Activated T-helper 2 cell treated with anti-CD3 and anti-CD28 coated beads, Interferon-gamma antibody, Interleukin-2, Interleukin-4, amounts not matched to agents 10 μg/mL and 5 μg/mL and 100 μg/mL, durations not matched to agents 14 hours and 24 hours and 36 hours (primary cell): ENCODE measurements at regions of chr4 and their contacts with region 1.

Region 1: GRCh38 chr4:102344954-102345794 is at the start of gene SLC39A8:
- DNase-seq: peak; percentile 88
- H3K4me3 Mint-ChIP-seq: peak within 1 kb of the TSS; percentile 83
- H3K27ac Mint-ChIP-seq: peak within 1 kb of the TSS; percentile 96
- H3K4me1 Mint-ChIP-seq: peaks cover 38% of the 10 kb centered on the region
- H3K27me3 Mint-ChIP-seq: peaks cover 3% of the 10 kb centered on the region
- total RNA-seq, gene SLC39A8: 136 TPM in 2 replicates

Region 2: DNA sequence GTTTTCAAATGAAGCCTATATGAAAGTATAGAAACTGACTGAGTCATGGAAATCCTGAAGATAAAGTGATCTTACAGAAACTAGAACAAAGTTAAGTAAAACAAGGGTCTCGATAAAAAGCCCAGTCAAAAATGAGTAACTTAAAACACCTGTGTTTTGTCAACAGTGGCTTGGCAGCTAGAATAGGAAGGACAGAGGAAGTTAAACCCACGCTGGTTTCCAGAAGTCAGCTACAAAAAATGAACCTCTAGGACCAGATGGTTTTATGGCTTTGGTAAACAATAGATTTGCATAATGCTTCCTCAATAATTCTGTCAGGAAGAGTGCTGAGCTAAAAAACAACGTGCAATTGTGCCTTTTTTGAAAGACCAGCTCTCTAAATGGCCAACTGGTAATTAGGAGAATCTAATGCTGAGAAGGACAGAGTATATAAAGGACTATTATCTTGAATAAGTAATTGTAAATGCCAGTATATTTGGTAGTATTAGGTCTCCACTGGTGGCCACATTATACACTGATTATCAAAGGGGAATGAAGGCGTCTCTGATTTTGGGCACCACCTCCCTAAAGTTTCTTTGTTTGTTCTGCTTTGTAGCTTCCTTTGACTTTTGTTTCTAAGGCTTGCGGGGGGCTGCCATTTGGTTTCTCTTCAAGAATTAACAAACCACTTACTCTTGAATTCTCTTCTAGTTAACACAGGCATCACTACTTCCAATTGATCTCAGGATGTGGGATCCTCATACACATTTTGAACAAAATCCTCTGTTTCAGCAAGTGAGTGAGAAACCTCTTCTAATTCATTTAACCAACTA is 925.6 kb before region 1 on chr4:
- intact Hi-C with region 1: loop called (anchors 2 kb)
- DNase-seq: no peak
- H3K4me3 Mint-ChIP-seq: peak overlapping the region; percentile 1
- H3K27ac Mint-ChIP-seq: peak overlapping the region; percentile 0
- H3K4me1 Mint-ChIP-seq: peaks cover 46% of the 10 kb centered on the region
- H3K27me3 Mint-ChIP-seq: peaks cover 17% of the 10 kb centered on the region

Region 3: GRCh38 chr4:102390438-102390837 is 45.3 kb after region 1 on chr4:
- intact Hi-C with region 1: loop called (anchors 1 kb)
- DNase-seq: no peak
- H3K4me3 Mint-ChIP-seq: no peak overlapping the region
- H3K27ac Mint-ChIP-seq: peak overlapping the region; percentile 44
- H3K4me1 Mint-ChIP-seq: peaks cover 23% of the 10 kb centered on the region
- H3K27me3 Mint-ChIP-seq: peaks cover 10% of the 10 kb centered on the region

Region 4: GRCh38 chr4:102535398-102536082 is 190.4 kb after region 1 on chr4:
- intact Hi-C with region 1: loop called (anchors 2 kb)
- DNase-seq: no peak
- H3K4me3 Mint-ChIP-seq: peak overlapping the region; percentile 5
- H3K27ac Mint-ChIP-seq: peak overlapping the region; percentile 55
- H3K4me1 Mint-ChIP-seq: peaks cover 54% of the 10 kb centered on the region
- H3K27me3 Mint-ChIP-seq: no peaks in the 10 kb centered on the region

Region 5: GRCh38 chr4:102826890-102827673 is 481.9 kb after region 1 on chr4 and contains the start of gene UBE2D3:
- intact Hi-C with region 1: loop called (anchors 1 kb)
- DNase-seq: peak; percentile 95
- H3K4me3 Mint-ChIP-seq: no peak within 1 kb of the TSS
- H3K27ac Mint-ChIP-seq: no peak within 1 kb of the TSS
- H3K4me1 Mint-ChIP-seq: peaks cover 32% of the 10 kb centered on the region
- H3K27me3 Mint-ChIP-seq: no peaks in the 10 kb centered on the region
- total RNA-seq, gene UBE2D3: 429 and 432 TPM in 2 replicates

Region 6: GRCh38 chr4:103075901-103076739 is 730.9 kb after region 1 on chr4:
- intact Hi-C with region 1: loop called (anchors 1 kb)
- DNase-seq: peak; percentile 66
- H3K4me3 Mint-ChIP-seq: peak overlapping the region; percentile 90
- H3K27ac Mint-ChIP-seq: peak overlapping the region; percentile 98
- H3K4me1 Mint-ChIP-seq: peaks cover 45% of the 10 kb centered on the region
- H3K27me3 Mint-ChIP-seq: no peaks in the 10 kb centered on the region